ENCODE measurements at regions of chr21 and their contacts with region 1.

Region 1: GRCh38 chr21:41283211-41283818 is 33.3 kb upstream of the FAM3B start:
- DNase-seq: peak; percentile 77
- ATAC-seq: peak; percentile 81
- H3K4me3 ChIP-seq: no peak overlapping the region
- H3K4me3 Mint-ChIP-seq: no peak overlapping the region
- H3K27ac ChIP-seq: no peak overlapping the region
- H3K27ac Mint-ChIP-seq: no peak overlapping the region
- H3K4me1 ChIP-seq: peaks cover 0 to 4% of the 10 kb centered on the region in 2 donors
- H3K4me1 Mint-ChIP-seq: peaks cover 2% of the 10 kb centered on the region
- H3K27me3 ChIP-seq: peaks cover 0 to 2% (median 0%) of the 10 kb centered on the region in 4 experiments
- H3K27me3 Mint-ChIP-seq: peaks cover 7% of the 10 kb centered on the region
- CTCF ChIP-seq: peak; percentile 93

Region 2: DNA sequence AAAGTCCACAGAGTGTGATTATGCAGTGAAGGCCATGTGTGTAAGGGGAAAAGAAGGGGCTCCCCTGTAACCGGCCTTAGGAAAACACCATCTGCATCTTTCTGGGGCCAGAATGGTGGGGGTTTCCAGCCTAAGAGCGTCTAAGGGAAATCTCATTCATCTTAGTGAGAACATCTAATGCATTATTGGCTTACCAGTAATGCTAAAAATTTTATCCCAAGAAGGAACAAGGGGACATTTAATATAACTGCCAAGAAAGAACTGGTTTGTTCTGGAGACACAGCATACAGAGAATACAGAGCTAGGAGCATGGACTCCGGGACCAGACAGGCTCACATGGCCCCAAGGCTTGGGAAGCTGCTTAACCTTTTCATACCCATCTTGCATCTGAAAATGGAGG is 378.1 kb before region 1 on chr21:
- CTCF ChIA-PET with region 1: no interaction called
- POLR2A ChIA-PET with region 1: no interaction called
- intact Hi-C with region 1: no loop called
- DNase-seq: no peak
- ATAC-seq: no peak
- H3K4me3 ChIP-seq: no peak overlapping the region
- H3K4me3 Mint-ChIP-seq: no peak overlapping the region
- H3K27ac ChIP-seq: no peak overlapping the region
- H3K27ac Mint-ChIP-seq: no peak overlapping the region
- H3K4me1 ChIP-seq: no peaks in the 10 kb centered on the region
- H3K4me1 Mint-ChIP-seq: no peaks in the 10 kb centered on the region
- H3K27me3 ChIP-seq: no peaks in the 10 kb centered on the region
- H3K27me3 Mint-ChIP-seq: no peaks in the 10 kb centered on the region
- CTCF ChIP-seq: no peak

Region 3: DNA sequence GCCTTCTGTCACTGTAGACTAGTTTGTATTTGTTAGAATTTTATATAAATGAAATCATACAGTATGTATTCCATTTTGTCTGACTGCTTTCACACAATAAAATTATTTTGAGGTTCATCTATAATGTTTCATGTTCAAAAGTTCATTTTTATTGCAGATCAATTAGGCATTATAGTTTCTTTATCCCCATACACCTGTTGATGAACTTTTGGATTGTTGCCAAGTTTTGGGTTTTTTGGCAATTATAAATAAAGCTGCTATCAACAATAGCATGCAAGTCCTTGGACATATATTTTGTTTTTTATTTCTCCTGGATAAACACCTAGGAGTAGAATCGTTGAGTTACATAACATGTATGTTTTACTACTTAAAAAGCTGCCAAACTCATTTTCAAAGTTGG is 13.8 kb before region 1 on chr21:
- CTCF ChIA-PET with region 1: interaction called, 16 read pairs
- POLR2A ChIA-PET with region 1: no interaction called
- intact Hi-C with region 1: no loop called
- DNase-seq: no peak
- ATAC-seq: no peak
- H3K4me3 ChIP-seq: no peak overlapping the region
- H3K4me3 Mint-ChIP-seq: no peak overlapping the region
- H3K27ac ChIP-seq: no peak overlapping the region
- H3K27ac Mint-ChIP-seq: no peak overlapping the region
- H3K4me1 ChIP-seq: no peaks in the 10 kb centered on the region
- H3K4me1 Mint-ChIP-seq: no peaks in the 10 kb centered on the region
- H3K27me3 ChIP-seq: no peaks in the 10 kb centered on the region
- H3K27me3 Mint-ChIP-seq: no peaks in the 10 kb centered on the region
- CTCF ChIP-seq: no peak

Region 4: GRCh38 chr21:41369105-41369919 is 86.0 kb after region 1 on chr21:
- CTCF ChIA-PET with region 1: interaction called, 46 read pairs
- POLR2A ChIA-PET with region 1: interaction called, 3 read pairs
- intact Hi-C with region 1: loop called (anchors 5 kb)
- DNase-seq: peak; percentile 76
- ATAC-seq: peak; percentile 42
- H3K4me3 ChIP-seq: peak overlapping the region; percentile 36 to 81 (median 52)
- H3K4me3 Mint-ChIP-seq: peak overlapping the region; percentile 74
- H3K27ac ChIP-seq: peak overlapping the region; percentile 69 to 88
- H3K27ac Mint-ChIP-seq: peak overlapping the region; percentile 87
- H3K4me1 ChIP-seq: peaks cover 62 to 70% of the 10 kb centered on the region in 2 donors
- H3K4me1 Mint-ChIP-seq: peaks cover 74% of the 10 kb centered on the region
- H3K27me3 ChIP-seq: no peaks in the 10 kb centered on the region
- H3K27me3 Mint-ChIP-seq: no peaks in the 10 kb centered on the region
- CTCF ChIP-seq: no peak

Region 5: GRCh38 chr21:41419911-41420862 is 136.9 kb after region 1 on chr21:
- CTCF ChIA-PET with region 1: interaction called, 23 read pairs
- POLR2A ChIA-PET with region 1: no interaction called
- intact Hi-C with region 1: loop called (anchors 5 kb)
- DNase-seq: peak; percentile 84
- ATAC-seq: peak; percentile 92
- H3K4me3 ChIP-seq: peak overlapping the region; percentile 34 to 72 (median 55)
- H3K4me3 Mint-ChIP-seq: peak overlapping the region; percentile 93
- H3K27ac ChIP-seq: peak overlapping the region; percentile 58 to 65
- H3K27ac Mint-ChIP-seq: peak overlapping the region; percentile 84
- H3K4me1 ChIP-seq: peaks cover 43 to 53% of the 10 kb centered on the region in 2 donors
- H3K4me1 Mint-ChIP-seq: peaks cover 52% of the 10 kb centered on the region
- H3K27me3 ChIP-seq: no peaks in the 10 kb centered on the region
- H3K27me3 Mint-ChIP-seq: no peaks in the 10 kb centered on the region
- CTCF ChIP-seq: no peak

Region 6: GRCh38 chr21:41431788-41432548 is 148.7 kb after region 1 on chr21:
- CTCF ChIA-PET with region 1: interaction called, 23 read pairs
- POLR2A ChIA-PET with region 1: no interaction called
- intact Hi-C with region 1: no loop called
- DNase-seq: peak; percentile 81
- ATAC-seq: peak; percentile 99
- H3K4me3 ChIP-seq: peak overlapping the region in 1 of 5 experiments; percentile 23
- H3K4me3 Mint-ChIP-seq: peak overlapping the region; percentile 65
- H3K27ac ChIP-seq: peak overlapping the region; percentile 6 to 19
- H3K27ac Mint-ChIP-seq: peak overlapping the region; percentile 43
- H3K4me1 ChIP-seq: peaks cover 42 to 49% of the 10 kb centered on the region in 2 donors
- H3K4me1 Mint-ChIP-seq: peaks cover 56% of the 10 kb centered on the region
- H3K27me3 ChIP-seq: no peaks in the 10 kb centered on the region
- H3K27me3 Mint-ChIP-seq: no peaks in the 10 kb centered on the region
- CTCF ChIP-seq: no peak

Region 7: DNA sequence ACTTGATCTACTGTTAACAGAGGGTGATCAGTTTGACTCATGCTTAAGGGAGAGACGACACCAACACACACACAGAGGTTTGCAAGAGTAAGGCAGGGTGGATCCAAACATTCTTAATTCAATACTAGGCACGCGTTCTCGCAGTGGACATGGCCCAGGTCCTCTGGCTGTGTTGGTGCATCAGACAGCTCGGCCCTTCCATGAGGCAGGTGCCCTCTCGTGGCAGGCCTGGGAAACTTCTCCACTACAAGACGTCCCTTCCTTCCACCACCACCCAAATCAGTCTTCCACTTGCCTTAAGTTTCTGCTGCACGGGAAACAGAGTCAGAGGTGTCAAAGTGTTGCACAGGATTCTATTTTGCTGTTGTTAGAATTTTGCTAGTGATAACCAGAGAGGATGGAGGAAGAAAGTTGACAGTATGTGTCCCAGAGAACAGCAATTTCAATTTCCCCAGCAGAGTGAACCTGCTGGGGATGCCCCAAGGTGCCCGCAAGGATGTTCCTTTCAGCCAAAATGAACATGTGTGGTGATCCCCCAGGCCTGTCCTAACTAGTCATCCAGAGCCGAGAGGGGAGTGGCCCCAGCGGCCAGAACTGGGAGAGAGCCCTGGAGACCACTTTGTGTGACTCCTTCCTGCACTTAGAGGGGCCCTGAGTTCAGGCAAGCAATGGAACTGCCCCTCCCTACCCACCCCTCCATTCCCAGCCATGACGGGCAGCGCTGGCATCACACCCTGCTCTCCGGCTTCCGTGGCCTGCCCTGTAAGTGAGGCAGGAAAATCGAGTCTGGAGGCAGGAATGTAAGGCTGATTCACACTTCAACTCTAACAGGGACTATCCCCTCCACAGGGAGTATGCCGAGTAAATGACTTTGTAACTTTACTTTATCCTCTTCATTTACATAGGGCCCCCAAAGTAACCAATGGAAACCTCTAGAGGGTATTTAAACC is 177.5 kb after region 1 on chr21:
- CTCF ChIA-PET with region 1: interaction called, 138 read pairs
- POLR2A ChIA-PET with region 1: no interaction called
- intact Hi-C with region 1: no loop called
- DNase-seq: peak; percentile 69
- ATAC-seq: peak; percentile 75
- H3K4me3 ChIP-seq: no peak overlapping the region
- H3K4me3 Mint-ChIP-seq: no peak overlapping the region
- H3K27ac ChIP-seq: no peak overlapping the region
- H3K27ac Mint-ChIP-seq: no peak overlapping the region
- H3K4me1 ChIP-seq: peaks cover 11 to 15% of the 10 kb centered on the region in 2 donors
- H3K4me1 Mint-ChIP-seq: peaks cover 22% of the 10 kb centered on the region
- H3K27me3 ChIP-seq: no peaks in the 10 kb centered on the region
- H3K27me3 Mint-ChIP-seq: no peaks in the 10 kb centered on the region
- CTCF ChIP-seq: peak; percentile 75

Region 8: DNA sequence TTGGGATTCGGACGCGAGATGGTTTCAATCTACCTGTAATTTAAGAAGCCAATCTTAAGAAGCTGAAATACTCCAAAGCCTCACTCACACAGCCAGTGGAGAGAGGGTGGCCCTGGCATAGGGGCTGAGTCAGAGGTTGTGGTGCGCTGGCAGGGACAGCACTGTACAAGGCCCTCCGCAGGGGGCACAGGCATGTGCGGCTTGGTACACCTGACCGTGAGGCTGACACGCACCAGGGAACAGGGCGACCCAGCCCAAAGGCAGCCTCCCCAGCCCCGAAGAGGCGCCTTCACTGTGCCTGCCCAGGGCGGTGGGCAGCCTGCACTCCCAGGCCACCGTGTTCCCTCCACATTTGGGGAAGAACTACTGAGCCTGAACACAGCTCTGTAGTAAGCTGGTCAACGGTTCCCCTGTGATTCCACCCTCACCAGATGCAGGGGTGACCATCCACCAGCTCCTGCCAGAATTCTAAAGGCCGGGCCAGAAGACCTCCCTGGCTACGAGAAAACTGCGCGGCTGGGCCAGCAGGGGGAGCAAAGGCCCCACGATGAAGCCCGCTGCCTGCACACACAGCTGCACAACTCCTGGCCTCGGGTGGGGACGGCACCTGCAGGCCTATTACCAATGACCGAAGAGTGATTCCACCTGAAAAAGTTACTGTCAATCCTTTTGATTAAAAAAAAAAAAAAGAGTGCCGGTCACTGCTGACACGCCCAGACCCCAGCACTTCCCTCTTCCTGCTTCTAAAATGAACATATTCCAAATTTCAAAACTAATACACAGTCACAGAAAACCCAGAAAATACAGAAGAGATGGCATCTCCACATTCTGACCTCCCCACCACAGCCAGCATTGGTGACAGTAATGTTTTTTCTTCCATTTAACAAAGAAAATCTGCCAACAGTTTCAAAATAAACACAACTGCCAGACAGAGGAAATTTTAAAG is 533.2 kb after region 1 on chr21:
- CTCF ChIA-PET with region 1: interaction called, 50 read pairs
- POLR2A ChIA-PET with region 1: no interaction called
- intact Hi-C with region 1: no loop called
- DNase-seq: peak; percentile 76
- ATAC-seq: peak; percentile 95
- H3K4me3 ChIP-seq: no peak overlapping the region
- H3K4me3 Mint-ChIP-seq: no peak overlapping the region
- H3K27ac ChIP-seq: no peak overlapping the region
- H3K27ac Mint-ChIP-seq: no peak overlapping the region
- H3K4me1 ChIP-seq: peaks cover 0 to 5% of the 10 kb centered on the region in 2 donors
- H3K4me1 Mint-ChIP-seq: peaks cover 8% of the 10 kb centered on the region
- H3K27me3 ChIP-seq: no peaks in the 10 kb centered on the region
- H3K27me3 Mint-ChIP-seq: no peaks in the 10 kb centered on the region
- CTCF ChIP-seq: peak; percentile 85